Naive thymus-derived CD4-positive, alpha-beta T cell (primary cell): ENCODE measurements at regions of chr9 and their contacts with region 1.

Region 1: GRCh38 chr9:128455849-128456612 is at the start of gene ODF2:
- DNase-seq: peak; percentile 96 to 99 (median 98)
- ATAC-seq: peak; percentile 94
- H3K4me3 ChIP-seq: peak within 1 kb of the TSS; percentile 87
- H3K4me3 Mint-ChIP-seq: peak within 1 kb of the TSS; percentile 85 to 94 (median 90)
- H3K27ac ChIP-seq: peak within 1 kb of the TSS; percentile 88
- H3K27ac Mint-ChIP-seq: peak within 1 kb of the TSS; percentile 76 to 94 (median 90)
- H3K4me1 ChIP-seq: peaks cover 7 to 9% of the 10 kb centered on the region in 2 donors
- H3K4me1 Mint-ChIP-seq: peaks cover 15 to 27% (median 20%) of the 10 kb centered on the region in 7 donors
- H3K27me3 ChIP-seq: no peaks in the 10 kb centered on the region
- H3K27me3 Mint-ChIP-seq: no peaks in the 10 kb centered on the region
- total RNA-seq, gene ODF2: 25.0 to 52.8 (median 30.2) TPM

Region 2: GRCh38 chr9:128203024-128203706 is 252.9 kb before region 1 on chr9 and contains the start of gene DNM1:
- CTCF ChIA-PET with region 1: no interaction called
- POLR2A ChIA-PET with region 1: no interaction called
- intact Hi-C with region 1: loop called in 1 of 2 experiments (anchors 5 kb)
- DNase-seq: peak; percentile 50 to 89 (median 80)
- ATAC-seq: peak; percentile 99
- H3K4me3 ChIP-seq: peak within 1 kb of the TSS; percentile 51
- H3K4me3 Mint-ChIP-seq: peak within 1 kb of the TSS; percentile 63 to 83 (median 76)
- H3K27ac ChIP-seq: no peak within 1 kb of the TSS
- H3K27ac Mint-ChIP-seq: peak within 1 kb of the TSS in 7 of 9 donors; percentile 3 to 84 (median 73)
- H3K4me1 ChIP-seq: peaks cover 4 to 8% of the 10 kb centered on the region in 2 donors
- H3K4me1 Mint-ChIP-seq: peaks cover 6 to 14% (median 8%) of the 10 kb centered on the region in 7 donors
- H3K27me3 ChIP-seq: peaks cover 0 to 5% of the 10 kb centered on the region in 2 donors
- H3K27me3 Mint-ChIP-seq: peaks cover 0 to 33% (median 6%) of the 10 kb centered on the region in 5 donors
- total RNA-seq, gene DNM1: 0.24 to 2.0 (median 0.94) TPM

Region 3: DNA sequence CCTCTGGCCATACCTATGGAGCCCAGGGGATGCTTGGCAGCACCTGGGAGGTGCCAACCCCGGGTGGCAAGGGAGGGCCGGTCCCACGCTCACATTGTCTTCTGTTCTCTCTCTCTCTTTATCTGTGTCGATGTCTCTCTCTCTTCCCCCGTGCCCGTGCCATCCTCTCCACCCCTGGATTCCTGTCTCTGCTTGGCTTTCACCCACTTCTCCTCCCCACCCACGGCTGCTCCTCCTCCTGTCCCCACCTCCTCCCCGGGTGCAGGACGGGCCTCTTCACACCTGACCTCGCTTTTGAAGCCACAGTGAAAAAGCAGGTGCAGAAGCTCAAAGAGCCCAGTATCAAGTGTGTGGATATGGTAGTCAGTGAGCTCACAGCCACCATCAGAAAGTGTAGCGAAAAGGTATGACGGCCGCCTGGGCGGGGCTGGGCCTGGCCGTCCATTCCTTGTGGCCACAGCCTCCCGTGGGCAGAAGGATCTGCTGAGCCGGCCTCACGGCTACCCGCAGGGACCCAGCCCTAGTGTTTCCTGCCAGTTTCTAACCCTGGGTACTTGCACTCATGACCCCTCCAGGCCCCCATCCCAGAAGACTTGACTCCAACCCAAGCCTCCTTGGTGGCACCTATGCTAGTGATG is 230.1 kb before region 1 on chr9:
- CTCF ChIA-PET with region 1: no interaction called
- POLR2A ChIA-PET with region 1: no interaction called
- intact Hi-C with region 1: no loop called
- DNase-seq: no peak
- ATAC-seq: no peak
- H3K4me3 ChIP-seq: no peak overlapping the region
- H3K4me3 Mint-ChIP-seq: no peak overlapping the region
- H3K27ac ChIP-seq: no peak overlapping the region
- H3K27ac Mint-ChIP-seq: no peak overlapping the region
- H3K4me1 ChIP-seq: no peaks in the 10 kb centered on the region
- H3K4me1 Mint-ChIP-seq: no peaks in the 10 kb centered on the region
- H3K27me3 ChIP-seq: no peaks in the 10 kb centered on the region
- H3K27me3 Mint-ChIP-seq: no peaks in the 10 kb centered on the region

Region 4: DNA sequence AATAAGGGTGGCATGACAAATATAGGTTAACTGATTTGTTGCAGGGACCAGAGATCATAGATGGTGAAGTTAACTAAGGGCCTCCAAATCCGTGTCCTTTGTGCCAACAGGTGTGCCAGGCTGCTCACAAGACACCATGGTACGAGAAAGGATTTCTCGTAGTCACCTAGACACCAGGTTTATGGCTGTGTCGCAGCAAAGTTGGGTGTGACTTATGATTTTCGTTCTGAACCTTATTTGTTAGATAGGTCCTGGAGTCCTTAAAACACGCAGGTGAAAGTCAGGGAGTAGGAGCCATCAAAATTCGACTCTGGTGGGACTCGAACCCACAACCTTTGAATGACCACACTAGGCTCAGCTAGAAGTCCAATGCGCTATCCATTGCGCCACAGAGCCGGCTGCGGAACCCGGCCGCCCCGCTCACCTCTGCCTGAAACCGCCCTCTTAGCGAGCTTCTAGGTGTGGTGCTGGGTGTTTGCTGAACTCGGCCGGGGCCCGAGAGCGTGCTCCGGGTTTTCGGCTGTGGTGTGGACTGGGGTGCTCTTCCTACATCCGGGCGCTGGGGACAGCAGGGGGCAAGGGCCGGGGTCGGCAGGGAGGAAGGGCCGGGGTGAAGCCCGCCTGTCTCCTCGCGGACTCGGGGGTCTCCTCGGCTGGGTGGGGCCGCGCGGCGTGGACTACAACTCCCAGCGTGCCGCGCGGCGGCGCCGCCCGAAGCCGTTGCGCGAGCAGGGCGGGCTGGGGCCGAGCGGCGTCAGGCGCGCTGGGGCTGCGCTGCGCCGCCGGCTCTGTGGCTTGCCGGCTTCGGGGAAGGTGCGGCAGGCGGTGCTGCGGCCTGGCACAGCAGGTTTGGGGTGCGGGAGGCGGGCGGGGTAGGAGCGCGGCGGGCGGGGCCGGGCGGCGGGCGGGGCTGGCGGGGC is 116.0 kb before region 1 on chr9 and contains the start of gene SLC27A4:
- CTCF ChIA-PET with region 1: no interaction called
- POLR2A ChIA-PET with region 1: no interaction called
- intact Hi-C with region 1: loop called in 1 of 2 experiments (anchors 1 kb)
- DNase-seq: peak; percentile 75 to 86 (median 82)
- ATAC-seq: peak; percentile 96
- H3K4me3 ChIP-seq: peak within 1 kb of the TSS; percentile 66
- H3K4me3 Mint-ChIP-seq: peak within 1 kb of the TSS; percentile 87 to 98 (median 95)
- H3K27ac ChIP-seq: peak within 1 kb of the TSS; percentile 69
- H3K27ac Mint-ChIP-seq: peak within 1 kb of the TSS; percentile 70 to 93 (median 90)
- H3K4me1 ChIP-seq: peaks cover 4 to 12% of the 10 kb centered on the region in 2 donors
- H3K4me1 Mint-ChIP-seq: peaks cover 6 to 11% (median 9%) of the 10 kb centered on the region in 7 donors
- H3K27me3 ChIP-seq: no peaks in the 10 kb centered on the region
- H3K27me3 Mint-ChIP-seq: no peaks in the 10 kb centered on the region
- total RNA-seq, gene SLC27A4: 6.4 to 20.1 (median 12.1) TPM

Region 5: GRCh38 chr9:128438343-128439109 is 17.5 kb before region 1 on chr9:
- CTCF ChIA-PET with region 1: interaction called, 5 read pairs
- POLR2A ChIA-PET with region 1: interaction called, 3 read pairs
- intact Hi-C with region 1: loop called (anchors 1 kb)
- DNase-seq: peak; percentile 40 to 86 (median 70)
- ATAC-seq: peak; percentile 97
- H3K4me3 ChIP-seq: no peak overlapping the region
- H3K4me3 Mint-ChIP-seq: no peak overlapping the region
- H3K27ac ChIP-seq: no peak overlapping the region
- H3K27ac Mint-ChIP-seq: no peak overlapping the region
- H3K4me1 ChIP-seq: no peaks in the 10 kb centered on the region
- H3K4me1 Mint-ChIP-seq: peaks cover 0 to 6% (median 4%) of the 10 kb centered on the region in 7 donors
- H3K27me3 ChIP-seq: no peaks in the 10 kb centered on the region
- H3K27me3 Mint-ChIP-seq: no peaks in the 10 kb centered on the region

Region 6: GRCh38 chr9:128688512-128689292 is 232.7 kb after region 1 on chr9 and contains the start of gene SET:
- CTCF ChIA-PET with region 1: no interaction called
- POLR2A ChIA-PET with region 1: no interaction called
- intact Hi-C with region 1: loop called (anchors 1 kb)
- DNase-seq: peak; percentile 86 to 97 (median 93)
- ATAC-seq: peak; percentile 89
- H3K4me3 ChIP-seq: peak within 1 kb of the TSS; percentile 84
- H3K4me3 Mint-ChIP-seq: peak within 1 kb of the TSS; percentile 86 to 99 (median 90)
- H3K27ac ChIP-seq: peak within 1 kb of the TSS; percentile 85
- H3K27ac Mint-ChIP-seq: peak within 1 kb of the TSS; percentile 87 to 99 (median 97)
- H3K4me1 ChIP-seq: peaks cover 22 to 48% of the 10 kb centered on the region in 2 donors
- H3K4me1 Mint-ChIP-seq: peaks cover 45 to 67% (median 59%) of the 10 kb centered on the region in 7 donors
- H3K27me3 ChIP-seq: no peaks in the 10 kb centered on the region
- H3K27me3 Mint-ChIP-seq: no peaks in the 10 kb centered on the region
- total RNA-seq, gene SET: 222 to 488 (median 270) TPM

Region 7: GRCh38 chr9:128781187-128782070 is 325.4 kb after region 1 on chr9:
- CTCF ChIA-PET with region 1: no interaction called
- POLR2A ChIA-PET with region 1: no interaction called
- intact Hi-C with region 1: no loop called
- DNase-seq: no peak
- ATAC-seq: peak; percentile 37
- H3K4me3 ChIP-seq: no peak overlapping the region
- H3K4me3 Mint-ChIP-seq: no peak overlapping the region
- H3K27ac ChIP-seq: no peak overlapping the region
- H3K27ac Mint-ChIP-seq: no peak overlapping the region
- H3K4me1 ChIP-seq: peaks cover 2 to 4% of the 10 kb centered on the region in 2 donors
- H3K4me1 Mint-ChIP-seq: peaks cover 0 to 4% (median 0%) of the 10 kb centered on the region in 7 donors
- H3K27me3 ChIP-seq: no peaks in the 10 kb centered on the region
- H3K27me3 Mint-ChIP-seq: no peaks in the 10 kb centered on the region

Region 8: GRCh38 chr9:128818099-128818838 is 362.2 kb after region 1 on chr9 and contains the start of gene ENDOG:
- CTCF ChIA-PET with region 1: no interaction called
- POLR2A ChIA-PET with region 1: no interaction called
- intact Hi-C with region 1: loop called in 1 of 2 experiments (anchors 5 kb)
- DNase-seq: peak; percentile 94 to 99 (median 97)
- ATAC-seq: peak; percentile 98
- H3K4me3 ChIP-seq: peak within 1 kb of the TSS; percentile 67
- H3K4me3 Mint-ChIP-seq: peak within 1 kb of the TSS; percentile 84 to 92 (median 91)
- H3K27ac ChIP-seq: peak within 1 kb of the TSS; percentile 72
- H3K27ac Mint-ChIP-seq: peak within 1 kb of the TSS; percentile 79 to 94 (median 87)
- H3K4me1 ChIP-seq: no peaks in the 10 kb centered on the region
- H3K4me1 Mint-ChIP-seq: peaks cover 7 to 29% (median 12%) of the 10 kb centered on the region in 7 donors
- H3K27me3 ChIP-seq: no peaks in the 10 kb centered on the region
- H3K27me3 Mint-ChIP-seq: no peaks in the 10 kb centered on the region
- total RNA-seq, gene ENDOG: 9.4 to 18.3 (median 14.7) TPM

Region 9: DNA sequence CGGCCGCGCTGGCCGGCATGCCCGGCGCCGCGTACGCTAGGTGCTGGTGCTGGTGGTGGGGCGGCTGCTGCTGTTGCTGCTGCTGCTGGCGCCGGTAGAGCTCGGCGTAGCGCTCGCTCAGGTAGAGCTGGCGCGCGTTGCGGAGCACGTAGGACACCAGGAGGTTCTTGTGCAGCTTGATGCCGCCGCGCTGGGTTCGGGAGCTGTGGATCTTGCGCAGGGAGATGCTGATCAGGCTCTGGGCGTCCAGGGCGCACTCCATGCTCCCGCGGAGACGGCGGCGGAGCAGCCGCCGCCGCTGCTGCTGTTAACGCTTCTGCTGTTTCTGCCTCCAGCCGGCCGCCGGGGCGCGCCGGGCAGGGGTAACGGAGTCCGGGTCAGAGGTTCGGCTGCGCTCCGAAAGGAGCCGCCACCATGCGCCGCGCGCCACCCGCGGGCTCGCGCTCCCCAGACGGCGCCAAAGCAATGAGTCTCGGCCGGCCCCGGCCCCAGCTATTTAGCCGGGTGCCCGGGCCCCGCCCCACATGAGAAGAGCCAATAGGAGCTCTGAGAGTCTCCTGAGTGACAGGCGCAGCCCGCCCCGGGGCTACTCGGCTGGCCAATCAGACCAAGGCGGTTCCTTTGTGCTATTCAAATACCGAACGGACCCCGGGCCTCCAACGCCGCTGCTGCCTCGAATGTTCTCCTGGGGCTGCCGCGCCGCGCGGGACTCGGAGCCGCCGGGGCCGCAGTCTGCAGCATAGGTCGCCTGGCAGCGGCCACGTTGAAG is 721.9 kb after region 1 on chr9 and contains the start of gene IER5L:
- CTCF ChIA-PET with region 1: no interaction called
- POLR2A ChIA-PET with region 1: no interaction called
- intact Hi-C with region 1: loop called in 1 of 2 experiments (anchors 5 kb)
- DNase-seq: peak; percentile 89 to 97 (median 93)
- ATAC-seq: peak; percentile 94
- H3K4me3 ChIP-seq: peak within 1 kb of the TSS; percentile 86
- H3K4me3 Mint-ChIP-seq: peak within 1 kb of the TSS; percentile 90 to 96 (median 92)
- H3K27ac ChIP-seq: peak within 1 kb of the TSS; percentile 59
- H3K27ac Mint-ChIP-seq: peak within 1 kb of the TSS in 7 of 9 donors; percentile 43 to 81 (median 62)
- H3K4me1 ChIP-seq: peaks cover 0 to 4% of the 10 kb centered on the region in 2 donors
- H3K4me1 Mint-ChIP-seq: peaks cover 0 to 17% (median 5%) of the 10 kb centered on the region in 7 donors
- H3K27me3 ChIP-seq: no peaks in the 10 kb centered on the region
- H3K27me3 Mint-ChIP-seq: peaks cover 0 to 7% (median 0%) of the 10 kb centered on the region in 5 donors
- total RNA-seq, gene IER5L: 3.4 to 6.8 (median 3.8) TPM